Posterior vena cava (tissue), 2 donors: ENCODE measurements at regions of chr11 and their contacts with region 1.

Region 1: DNA sequence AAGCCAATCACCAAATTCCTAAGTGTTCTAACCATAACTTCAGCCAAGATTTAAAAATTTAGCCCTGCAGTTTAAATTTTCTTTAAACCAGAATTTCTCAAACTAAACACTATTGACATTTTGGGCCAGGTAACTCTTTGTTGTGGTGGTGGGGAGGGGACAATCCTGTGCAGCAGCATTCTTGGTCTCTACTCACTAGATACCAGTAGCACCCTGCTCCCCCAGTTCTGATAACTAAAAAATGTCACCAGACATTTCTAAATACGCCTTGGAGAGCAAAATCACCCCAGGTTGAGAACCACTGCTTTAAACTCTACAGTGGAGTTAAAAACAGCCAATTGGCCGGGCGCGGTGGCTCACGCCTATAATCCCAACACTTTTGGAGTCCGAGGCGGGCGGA is 80.0 kb downstream of the SBF2 start:
- DNase-seq: no peak

Region 2: GRCh38 chr11:10050561-10050960 is 163.4 kb before region 1 on chr11:
- intact Hi-C with region 1: no loop called
- DNase-seq: no peak

Region 3: DNA sequence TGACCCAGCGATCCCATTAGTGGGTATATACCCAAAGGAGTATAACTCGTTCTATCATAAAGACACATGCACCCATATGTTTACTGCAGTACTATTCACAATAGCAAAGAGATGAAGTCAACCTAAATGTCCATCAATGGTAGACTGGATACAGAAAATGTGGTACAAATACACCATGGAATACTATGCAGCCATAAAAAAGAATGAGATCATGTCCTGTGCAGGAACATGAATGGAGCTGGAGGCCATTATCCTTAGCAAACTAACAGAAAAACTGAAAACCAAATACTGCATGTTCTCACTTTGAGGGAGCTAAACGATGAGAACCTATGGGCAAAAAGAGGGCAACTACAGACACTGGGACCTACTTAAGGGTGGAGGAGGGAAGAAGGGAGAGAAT is 66.8 kb before region 1 on chr11:
- intact Hi-C with region 1: loop called in 1 of 2 experiments (anchors 2 kb)
- DNase-seq: no peak